ENCODE measurements at regions of chr5 and their contacts with region 1.

Region 1: GRCh38 chr5:17189381-17190036 is 27.9 kb upstream of the BASP1 start:
- DNase-seq: peak; percentile 96
- H3K4me3 ChIP-seq: no peak overlapping the region
- H3K27ac ChIP-seq: no peak overlapping the region
- H3K4me1 ChIP-seq: peaks cover 8% of the 10 kb centered on the region
- H3K27me3 ChIP-seq: no peaks in the 10 kb centered on the region
- CTCF ChIP-seq: peak; percentile 83 to 97 (median 84)
- POLR2A ChIP-seq: no peak

Region 2: DNA sequence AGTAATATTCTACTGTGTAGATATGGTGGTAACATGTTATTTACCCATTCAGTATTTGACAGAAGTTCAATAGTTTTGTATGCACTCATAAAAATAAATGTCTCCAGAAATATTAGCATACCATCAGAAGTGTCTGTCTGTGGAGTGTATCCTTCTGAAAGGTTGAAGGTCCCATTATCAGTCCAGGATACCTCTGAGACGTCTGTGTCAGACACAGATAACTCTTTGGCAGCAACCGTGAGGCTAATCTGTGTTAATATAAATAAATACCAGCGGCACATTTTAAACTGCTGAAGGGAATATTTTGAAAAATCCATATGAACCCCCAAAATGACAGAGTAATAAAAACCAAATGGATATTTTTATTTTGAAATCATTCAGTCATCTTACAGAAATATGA is 712.0 kb before region 1 on chr5:
- intact Hi-C with region 1: loop called (anchors 10 kb)
- DNase-seq: no peak
- H3K4me3 ChIP-seq: no peak overlapping the region
- H3K27ac ChIP-seq: no peak overlapping the region
- H3K4me1 ChIP-seq: no peaks in the 10 kb centered on the region
- H3K27me3 ChIP-seq: no peaks in the 10 kb centered on the region
- CTCF ChIP-seq: no peak
- POLR2A ChIP-seq: no peak

Region 3: GRCh38 chr5:16791036-16791705 is 398.3 kb before region 1 on chr5:
- intact Hi-C with region 1: loop called (anchors 10 kb)
- DNase-seq: peak; percentile 55
- H3K4me3 ChIP-seq: no peak overlapping the region
- H3K27ac ChIP-seq: no peak overlapping the region
- H3K4me1 ChIP-seq: peaks cover 6% of the 10 kb centered on the region
- H3K27me3 ChIP-seq: no peaks in the 10 kb centered on the region
- CTCF ChIP-seq: peak; percentile 80 to 92 (median 86)
- POLR2A ChIP-seq: no peak

Region 4: DNA sequence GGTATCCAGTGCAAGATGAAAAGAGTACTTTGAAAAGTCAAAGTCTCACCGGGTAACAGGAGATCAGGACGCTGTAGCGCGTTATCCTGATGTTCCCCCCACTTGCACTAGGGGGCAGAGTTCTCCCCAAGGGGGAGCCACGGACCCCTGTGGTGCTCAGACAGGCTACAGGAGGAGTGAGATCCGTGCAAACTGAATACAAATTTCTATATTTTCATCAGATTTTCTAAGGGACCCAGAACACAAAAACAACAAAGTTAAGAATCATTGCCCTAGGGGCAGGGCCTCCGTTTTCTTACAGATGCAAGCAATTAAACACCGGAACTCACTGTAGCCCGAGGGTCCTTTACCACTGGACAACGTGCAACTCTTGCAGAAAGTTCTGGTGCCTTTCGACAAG is 255.4 kb before region 1 on chr5:
- intact Hi-C with region 1: loop called (anchors 10 kb)
- DNase-seq: peak; percentile 83
- H3K4me3 ChIP-seq: peak overlapping the region; percentile 81 to 99
- H3K27ac ChIP-seq: no peak overlapping the region
- H3K4me1 ChIP-seq: peaks cover 31% of the 10 kb centered on the region
- H3K27me3 ChIP-seq: no peaks in the 10 kb centered on the region
- CTCF ChIP-seq: peak; percentile 67 to 92 (median 70)
- POLR2A ChIP-seq: no peak

Region 5: DNA sequence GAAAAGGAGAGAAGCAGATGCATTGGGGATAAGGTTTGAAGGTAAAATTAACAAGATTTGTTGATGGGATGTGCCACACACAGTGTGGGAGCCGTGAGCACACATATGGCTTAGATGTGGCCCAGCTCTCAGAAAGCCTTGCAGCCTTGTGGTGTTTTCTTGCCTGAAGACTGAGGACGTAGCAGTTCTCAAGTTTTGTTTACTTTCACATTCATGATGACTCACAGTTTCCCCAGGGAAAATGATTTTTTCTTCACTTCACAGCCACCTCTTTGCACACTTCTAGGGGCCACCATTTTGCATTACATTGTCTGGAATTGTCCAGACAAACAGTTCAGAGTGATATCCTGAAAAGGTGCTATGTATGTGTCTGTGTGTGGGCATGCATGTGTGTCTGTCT is 154.2 kb after region 1 on chr5:
- intact Hi-C with region 1: no loop called
- DNase-seq: no peak
- H3K4me3 ChIP-seq: no peak overlapping the region
- H3K27ac ChIP-seq: no peak overlapping the region
- H3K4me1 ChIP-seq: no peaks in the 10 kb centered on the region
- H3K27me3 ChIP-seq: no peaks in the 10 kb centered on the region
- CTCF ChIP-seq: no peak
- POLR2A ChIP-seq: no peak

Measured in testis (tissue), 5 donors.